ENCODE measurements at regions of chr12 and their contacts with region 1.

Region 1: DNA sequence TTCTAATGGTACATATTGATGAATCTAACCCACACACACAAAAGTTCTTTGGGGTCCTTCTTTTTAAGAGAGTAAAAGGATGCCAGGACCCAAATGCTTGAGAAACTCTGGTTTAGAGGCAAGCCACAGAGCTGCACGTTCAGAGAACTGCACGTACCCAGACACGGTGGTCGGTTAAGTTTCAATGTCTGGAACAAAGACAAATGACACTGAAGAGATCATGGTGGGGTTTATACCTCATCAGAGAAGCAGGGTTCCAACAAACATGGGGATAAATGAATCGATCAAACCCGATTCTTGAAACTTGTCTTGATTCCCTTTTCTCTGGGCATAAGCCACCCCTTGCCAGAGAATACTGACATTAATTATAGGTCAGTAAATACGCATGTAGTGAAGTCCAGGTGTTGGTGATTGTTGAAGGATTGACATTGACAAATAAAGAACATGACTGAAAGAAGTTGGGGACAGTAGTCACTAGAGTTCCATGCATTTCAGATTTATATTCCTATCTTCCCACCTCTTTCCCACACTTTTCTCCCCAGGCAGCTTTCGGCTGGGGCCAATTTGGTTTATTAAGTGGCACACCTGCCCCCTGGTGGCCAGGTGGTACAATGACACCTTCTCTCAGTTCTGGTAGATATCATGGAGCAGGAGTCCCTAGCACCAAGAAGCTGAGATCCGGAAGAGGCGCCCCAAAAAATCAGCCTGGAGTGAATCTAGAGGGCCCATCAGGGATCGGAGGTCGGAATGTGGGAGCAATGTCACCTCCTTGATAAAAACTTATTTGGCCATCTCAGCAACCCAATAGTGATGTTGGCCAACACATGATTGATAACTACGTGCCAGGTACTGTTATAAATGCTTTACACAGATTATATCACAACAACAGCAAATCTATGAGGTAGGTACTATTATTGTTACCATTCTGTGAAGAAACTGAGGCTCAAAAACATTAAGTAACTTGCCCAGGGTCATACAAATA is 17.8 kb upstream of the HDAC7 start:
- DNase-seq: peak; percentile 73
- H3K4me3 ChIP-seq: no peak overlapping the region
- H3K27ac ChIP-seq: no peak overlapping the region
- H3K4me1 ChIP-seq: no peaks in the 10 kb centered on the region
- H3K27me3 ChIP-seq: no peaks in the 10 kb centered on the region
- CTCF ChIP-seq: peak; percentile 93

Region 2: DNA sequence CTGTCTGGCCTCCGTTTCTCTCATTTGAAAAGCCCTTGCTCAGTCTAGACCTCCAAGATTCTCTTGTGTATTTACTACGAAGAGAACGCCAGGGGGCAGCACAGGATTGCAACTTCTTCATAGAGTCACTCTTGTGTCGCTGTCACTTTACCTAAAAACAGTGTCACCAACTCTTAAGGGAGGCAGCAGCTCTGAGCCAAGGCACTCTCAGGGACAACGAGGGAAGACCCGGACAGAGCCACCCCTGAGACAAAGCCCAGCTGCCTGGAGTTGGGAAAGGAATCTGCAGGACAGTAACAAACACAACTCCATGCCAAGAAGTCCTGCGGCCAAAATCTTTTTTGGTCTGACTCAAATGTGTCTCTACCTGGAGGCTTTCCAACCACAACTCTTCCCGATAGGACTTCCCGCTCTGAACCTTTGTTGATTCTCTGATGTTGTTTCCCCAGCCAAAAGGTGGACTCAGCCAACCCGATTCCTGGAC is 122.0 kb before region 1 on chr12:
- intact Hi-C with region 1: loop called (anchors 2 kb)
- DNase-seq: peak; percentile 81
- H3K4me3 ChIP-seq: no peak overlapping the region
- H3K27ac ChIP-seq: no peak overlapping the region
- H3K4me1 ChIP-seq: peaks cover 7% of the 10 kb centered on the region
- H3K27me3 ChIP-seq: no peaks in the 10 kb centered on the region
- CTCF ChIP-seq: peak; percentile 69

Region 3: GRCh38 chr12:47779301-47779942 is 58.1 kb before region 1 on chr12:
- intact Hi-C with region 1: loop called (anchors 5 kb)
- DNase-seq: peak; percentile 93
- H3K4me3 ChIP-seq: no peak overlapping the region
- H3K27ac ChIP-seq: no peak overlapping the region
- H3K4me1 ChIP-seq: no peaks in the 10 kb centered on the region
- H3K27me3 ChIP-seq: no peaks in the 10 kb centered on the region
- CTCF ChIP-seq: peak; percentile 94

Region 4: GRCh38 chr12:47802324-47802735 is 35.2 kb before region 1 on chr12:
- intact Hi-C with region 1: loop called (anchors 5 kb)
- DNase-seq: no peak
- H3K4me3 ChIP-seq: no peak overlapping the region
- H3K27ac ChIP-seq: peak overlapping the region; percentile 33
- H3K4me1 ChIP-seq: peaks cover 7% of the 10 kb centered on the region
- H3K27me3 ChIP-seq: no peaks in the 10 kb centered on the region
- CTCF ChIP-seq: no peak